Activated CD4-positive, alpha-beta T cell treated with anti-CD3 and anti-CD28 coated beads, Interleukin-2, amount 10 ng/mL, durations not matched to agents 24 days and 14 days (primary cell): ENCODE measurements at regions of chr16 and their contacts with region 1.

Region 1: GRCh38 chr16:66751303-66751991 is at the start of gene DYNC1LI2:
- DNase-seq: peak; percentile 95
- H3K4me3 Mint-ChIP-seq: peak within 1 kb of the TSS; percentile 91
- H3K27ac Mint-ChIP-seq: peak within 1 kb of the TSS; percentile 90
- H3K4me1 Mint-ChIP-seq: peaks cover 47% of the 10 kb centered on the region
- H3K27me3 Mint-ChIP-seq: peaks cover 25% of the 10 kb centered on the region
- total RNA-seq, gene DYNC1LI2: 51.4 and 56.5 TPM in 2 replicates

Region 2: DNA sequence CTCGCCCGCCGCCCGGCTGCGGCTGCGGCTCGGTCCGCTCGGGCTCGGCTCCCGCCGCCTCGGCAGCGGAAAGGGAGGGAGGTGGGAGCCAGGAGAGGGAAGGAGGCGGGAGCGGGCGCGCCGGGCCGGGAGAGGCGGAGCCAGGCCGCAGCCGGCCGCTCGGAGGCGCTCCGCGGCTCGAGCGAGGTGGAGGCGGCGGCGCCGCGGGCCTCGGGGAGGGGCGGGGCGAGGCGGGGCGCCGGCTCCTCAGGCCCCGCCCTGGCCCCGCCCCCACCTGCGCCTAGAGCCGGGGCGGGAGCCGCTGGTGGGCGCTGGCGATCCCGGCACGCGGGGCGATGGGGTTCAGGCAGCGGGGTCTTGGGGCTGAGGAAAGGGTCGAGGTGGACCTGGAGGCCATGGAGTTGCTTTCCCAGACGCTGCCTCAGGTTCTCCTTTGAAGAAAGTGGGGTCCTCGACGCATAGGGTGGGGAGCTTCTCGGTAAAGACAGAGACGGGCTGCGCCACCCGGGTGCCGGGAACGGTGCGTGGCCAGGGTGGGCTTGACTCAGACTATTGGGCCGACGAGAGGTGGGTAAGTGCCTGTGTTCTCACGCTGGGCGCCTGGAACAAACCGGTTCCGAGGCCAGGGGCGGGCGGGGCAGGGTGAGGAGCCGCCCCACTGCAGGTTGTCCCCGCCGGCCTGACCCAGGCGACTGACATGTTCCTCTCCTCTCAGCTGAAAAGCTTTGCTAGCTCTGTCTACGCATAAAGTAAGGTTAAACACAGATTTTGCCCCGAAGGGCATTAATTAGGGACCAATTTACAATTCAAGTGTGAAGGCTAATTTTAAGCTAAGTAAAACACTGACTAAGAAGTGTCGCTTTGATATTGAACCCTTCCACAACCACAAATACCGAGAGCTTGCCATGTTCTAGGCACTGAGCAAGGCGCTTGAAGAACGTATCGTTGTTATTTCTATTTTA is 54.5 kb before region 1 on chr16 and contains the start of gene CMTM4:
- intact Hi-C with region 1: loop called (anchors 2 kb)
- DNase-seq: peak; percentile 94
- H3K4me3 Mint-ChIP-seq: peak within 1 kb of the TSS; percentile 82
- H3K27ac Mint-ChIP-seq: no peak within 1 kb of the TSS
- H3K4me1 Mint-ChIP-seq: peaks cover 12% of the 10 kb centered on the region
- H3K27me3 Mint-ChIP-seq: peaks cover 45% of the 10 kb centered on the region
- total RNA-seq, gene CMTM4: 3.5 and 5.0 TPM in 2 replicates

Region 3: GRCh38 chr16:66859397-66860068 is 108.1 kb after region 1 on chr16:
- intact Hi-C with region 1: loop called (anchors 10 kb)
- DNase-seq: no peak
- H3K4me3 Mint-ChIP-seq: no peak overlapping the region
- H3K27ac Mint-ChIP-seq: no peak overlapping the region
- H3K4me1 Mint-ChIP-seq: no peaks in the 10 kb centered on the region
- H3K27me3 Mint-ChIP-seq: no peaks in the 10 kb centered on the region